PC-9 (cell line): ENCODE measurements at regions of chrX and their contacts with region 1.

Region 1: GRCh38 chrX:137051978-137052642 is 18.3 kb upstream of the GPR101 start:
- DNase-seq: peak; percentile 37 to 66
- H3K4me3 ChIP-seq: peak overlapping the region; percentile 50; the same call in 1 of the 2 replicates
- H3K27ac ChIP-seq: no peak overlapping the region
- H3K4me1 ChIP-seq: no peaks in the 10 kb centered on the region
- H3K27me3 ChIP-seq: peaks cover 74% of the 10 kb centered on the region
- CTCF ChIP-seq: peak; percentile 95

Region 2: GRCh38 chrX:135985141-135985972 is 1066.8 kb before region 1 on chrX and contains the start of gene SLC9A6:
- CTCF ChIA-PET with region 1: interaction called, 10 read pairs
- POLR2A ChIA-PET with region 1: no interaction called
- intact Hi-C with region 1: no loop called
- DNase-seq: peak; percentile 41 to 75
- H3K4me3 ChIP-seq: peak within 1 kb of the TSS; percentile 81
- H3K27ac ChIP-seq: no peak within 1 kb of the TSS
- H3K4me1 ChIP-seq: peaks cover 27% of the 10 kb centered on the region
- H3K27me3 ChIP-seq: no peaks in the 10 kb centered on the region
- CTCF ChIP-seq: no peak
- total RNA-seq, gene SLC9A6: 14.8 and 16.5 TPM in 2 replicates

Region 3: DNA sequence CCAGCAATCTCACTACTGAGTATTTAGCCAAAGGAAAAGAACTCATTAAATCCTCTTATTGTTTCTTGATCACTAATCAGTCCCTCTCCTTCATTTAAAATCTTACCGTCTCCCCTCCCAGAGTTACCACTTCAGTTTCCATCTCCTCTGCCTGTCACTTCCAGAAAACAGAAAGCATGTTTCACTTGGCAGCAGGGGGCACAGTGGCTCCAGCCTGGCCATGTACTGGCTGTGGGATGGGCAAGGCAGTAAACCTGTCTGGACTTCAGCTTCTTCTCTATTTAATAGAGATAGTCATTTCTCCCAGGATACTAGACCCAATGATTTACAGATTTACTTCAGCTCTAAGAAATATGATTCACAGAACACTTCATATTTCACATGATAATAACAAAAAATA is 341.0 kb before region 1 on chrX:
- CTCF ChIA-PET with region 1: no interaction called
- POLR2A ChIA-PET with region 1: no interaction called
- intact Hi-C with region 1: loop called (anchors 1 kb)
- DNase-seq: peak; percentile 36 to 44
- H3K4me3 ChIP-seq: no peak overlapping the region
- H3K27ac ChIP-seq: no peak overlapping the region
- H3K4me1 ChIP-seq: no peaks in the 10 kb centered on the region
- H3K27me3 ChIP-seq: no peaks in the 10 kb centered on the region
- CTCF ChIP-seq: peak; percentile 65

Region 4: GRCh38 chrX:136953867-136954787 is 98.0 kb before region 1 on chrX:
- CTCF ChIA-PET with region 1: no interaction called
- POLR2A ChIA-PET with region 1: no interaction called
- intact Hi-C with region 1: loop called (anchors 10 kb)
- DNase-seq: peak; percentile 36 to 59
- H3K4me3 ChIP-seq: no peak overlapping the region
- H3K27ac ChIP-seq: no peak overlapping the region
- H3K4me1 ChIP-seq: no peaks in the 10 kb centered on the region
- H3K27me3 ChIP-seq: no peaks in the 10 kb centered on the region
- CTCF ChIP-seq: peak; percentile 65

Region 5: GRCh38 chrX:137236837-137237236 is 184.7 kb after region 1 on chrX:
- CTCF ChIA-PET with region 1: no interaction called
- POLR2A ChIA-PET with region 1: no interaction called
- intact Hi-C with region 1: no loop called
- DNase-seq: no peak
- H3K4me3 ChIP-seq: no peak overlapping the region
- H3K27ac ChIP-seq: no peak overlapping the region
- H3K4me1 ChIP-seq: no peaks in the 10 kb centered on the region
- H3K27me3 ChIP-seq: peaks cover 50% of the 10 kb centered on the region
- CTCF ChIP-seq: no peak